A673 (cell line): ENCODE measurements at regions of chr10 and their contacts with region 1.

Region 1: GRCh38 chr10:68156373-68157185 is 47.3 kb downstream of the MYPN start:
- DNase-seq: peak; percentile 79
- H3K4me3 ChIP-seq: no peak overlapping the region
- H3K27ac ChIP-seq: no peak overlapping the region
- H3K4me1 ChIP-seq: peaks cover 33% of the 10 kb centered on the region
- H3K27me3 ChIP-seq: no peaks in the 10 kb centered on the region
- CTCF ChIP-seq: peak; percentile 91

Region 2: GRCh38 chr10:67861750-67862460 is 294.7 kb before region 1 on chr10:
- CTCF ChIA-PET with region 1: no interaction called
- POLR2A ChIA-PET with region 1: no interaction called
- intact Hi-C with region 1: loop called (anchors 1 kb)
- DNase-seq: no peak
- H3K4me3 ChIP-seq: no peak overlapping the region
- H3K27ac ChIP-seq: no peak overlapping the region
- H3K4me1 ChIP-seq: peaks cover 19% of the 10 kb centered on the region
- H3K27me3 ChIP-seq: no peaks in the 10 kb centered on the region
- CTCF ChIP-seq: no peak

Region 3: GRCh38 chr10:67884313-67884841 is 272.2 kb before region 1 on chr10 and contains the start of gene SIRT1:
- CTCF ChIA-PET with region 1: no interaction called
- POLR2A ChIA-PET with region 1: no interaction called
- intact Hi-C with region 1: loop called (anchors 1 kb)
- DNase-seq: peak; percentile 98
- H3K4me3 ChIP-seq: peak within 1 kb of the TSS; percentile 92
- H3K27ac ChIP-seq: peak within 1 kb of the TSS; percentile 87
- H3K4me1 ChIP-seq: peaks cover 16% of the 10 kb centered on the region
- H3K27me3 ChIP-seq: no peaks in the 10 kb centered on the region
- CTCF ChIP-seq: 0 out of 2 replicates have a peak, but pooled peaks have one; percentile 7
- total RNA-seq, gene SIRT1: 41.0 and 42.6 TPM in 2 replicates

Region 4: GRCh38 chr10:68082872-68083271 is 73.7 kb before region 1 on chr10:
- CTCF ChIA-PET with region 1: interaction called, 7 read pairs
- POLR2A ChIA-PET with region 1: no interaction called
- intact Hi-C with region 1: loop called (anchors 1 kb)
- DNase-seq: peak; percentile 66
- H3K4me3 ChIP-seq: no peak overlapping the region
- H3K27ac ChIP-seq: peak overlapping the region; percentile 34
- H3K4me1 ChIP-seq: peaks cover 27% of the 10 kb centered on the region
- H3K27me3 ChIP-seq: no peaks in the 10 kb centered on the region
- CTCF ChIP-seq: peak; percentile 66

Region 5: GRCh38 chr10:68105820-68106219 is 50.8 kb before region 1 on chr10:
- CTCF ChIA-PET with region 1: no interaction called
- POLR2A ChIA-PET with region 1: no interaction called
- intact Hi-C with region 1: no loop called
- DNase-seq: peak; percentile 84
- H3K4me3 ChIP-seq: peak overlapping the region; percentile 1
- H3K27ac ChIP-seq: peak overlapping the region; percentile 18
- H3K4me1 ChIP-seq: peaks cover 16% of the 10 kb centered on the region
- H3K27me3 ChIP-seq: no peaks in the 10 kb centered on the region
- CTCF ChIP-seq: no peak